HepG2 (cell line): ENCODE measurements at regions of chr6 and their contacts with region 1.

Region 1: GRCh38 chr6:143745166-143746133 is 67.7 kb downstream of the PHACTR2 start:
- DNase-seq: peak; percentile 100
- ATAC-seq: peak; percentile 94
- H3K4me3 ChIP-seq: peak overlapping the region; percentile 56 to 74 (median 57)
- H3K27ac ChIP-seq: peak overlapping the region; percentile 98
- H3K4me1 ChIP-seq: peaks cover 70% of the 10 kb centered on the region
- H3K27me3 ChIP-seq: no peaks in the 10 kb centered on the region
- CTCF ChIP-seq: no peak
- EP300 ChIP-seq: peak; percentile 93
- POLR2A ChIP-seq: peak in 1 of 2 experiments; percentile 90; a peak in 2 of 4 replicates
- RAD21 ChIP-seq: peak; percentile 61; the same call in 1 of the 2 replicates

Region 2: GRCh38 chr6:143575440-143575839 is 170.0 kb before region 1 on chr6:
- CTCF ChIA-PET with region 1: no interaction called
- POLR2A ChIA-PET with region 1: interaction called, 3 read pairs
- in situ Hi-C with region 1: no loop called
- intact Hi-C with region 1: loop called (anchors 5 kb)
- DNase-seq: peak; percentile 83
- ATAC-seq: peak; percentile 86
- H3K4me3 ChIP-seq: no peak overlapping the region
- H3K27ac ChIP-seq: no peak overlapping the region
- H3K4me1 ChIP-seq: no peaks in the 10 kb centered on the region
- H3K27me3 ChIP-seq: no peaks in the 10 kb centered on the region
- CTCF ChIP-seq: peak; percentile 94
- EP300 ChIP-seq: no peak
- POLR2A ChIP-seq: no peak
- RAD21 ChIP-seq: peak; percentile 95

Region 3: DNA sequence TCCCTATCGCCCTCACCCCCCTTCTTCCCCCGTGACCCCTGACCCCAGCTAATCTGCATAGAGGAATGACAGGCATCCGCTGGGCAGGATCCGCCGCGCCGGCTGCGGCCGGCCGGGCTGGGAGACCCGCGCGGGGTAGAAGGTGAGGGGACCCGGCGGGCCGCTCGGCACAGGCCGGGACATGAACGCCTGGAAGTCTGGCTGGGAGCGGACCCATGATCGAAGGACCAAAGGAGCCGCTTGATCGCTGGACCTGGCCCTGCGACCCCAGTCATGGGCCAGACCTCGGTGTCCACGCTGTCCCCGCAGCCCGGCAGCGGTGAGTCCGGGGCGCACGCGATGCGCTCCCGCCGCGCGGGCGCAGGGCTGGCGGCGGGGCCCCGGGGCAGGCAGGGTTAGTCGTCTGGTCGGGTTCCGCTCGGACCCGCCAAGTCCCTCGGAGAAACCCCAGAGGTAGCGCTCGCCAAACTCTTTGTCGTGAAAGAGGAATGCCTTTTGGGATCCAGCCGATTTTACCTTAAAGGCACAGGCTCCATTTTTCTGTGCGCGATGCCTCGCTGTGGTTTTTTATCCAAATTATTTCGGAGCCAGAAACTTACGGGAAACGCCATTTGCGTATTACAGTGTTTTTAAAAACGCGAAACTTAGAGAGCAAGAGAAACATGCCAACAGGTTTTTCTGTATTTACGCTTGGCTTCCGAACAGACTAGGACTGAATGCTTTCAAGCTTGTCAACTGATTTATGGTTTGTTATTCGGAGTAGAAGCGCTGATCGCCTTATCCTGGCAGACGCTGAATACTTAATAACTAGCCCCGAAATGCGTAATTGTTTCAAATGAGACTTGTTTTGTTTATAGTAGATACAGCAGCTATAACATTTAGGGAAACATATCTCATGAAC is 67.3 kb before region 1 on chr6 and contains the start of gene PHACTR2:
- CTCF ChIA-PET with region 1: no interaction called
- POLR2A ChIA-PET with region 1: interaction called, 20 read pairs
- in situ Hi-C with region 1: no loop called
- intact Hi-C with region 1: loop called (anchors 1 kb)
- DNase-seq: peak; percentile 76
- ATAC-seq: peak; percentile 97
- H3K4me3 ChIP-seq: peak within 1 kb of the TSS; percentile 79 to 90 (median 87)
- H3K27ac ChIP-seq: peak within 1 kb of the TSS; percentile 68
- H3K4me1 ChIP-seq: peaks cover 76% of the 10 kb centered on the region
- H3K27me3 ChIP-seq: no peaks in the 10 kb centered on the region
- CTCF ChIP-seq: peak; percentile 22; the same call in 1 of the 2 replicates
- EP300 ChIP-seq: peak; percentile 17 to 18; a peak in 1 of 4 replicates
- POLR2A ChIP-seq: peak; percentile 72 to 85
- RAD21 ChIP-seq: peak; percentile 76
- total RNA-seq, gene PHACTR2: 28.2 and 39.1 TPM in 2 replicates

Region 4: DNA sequence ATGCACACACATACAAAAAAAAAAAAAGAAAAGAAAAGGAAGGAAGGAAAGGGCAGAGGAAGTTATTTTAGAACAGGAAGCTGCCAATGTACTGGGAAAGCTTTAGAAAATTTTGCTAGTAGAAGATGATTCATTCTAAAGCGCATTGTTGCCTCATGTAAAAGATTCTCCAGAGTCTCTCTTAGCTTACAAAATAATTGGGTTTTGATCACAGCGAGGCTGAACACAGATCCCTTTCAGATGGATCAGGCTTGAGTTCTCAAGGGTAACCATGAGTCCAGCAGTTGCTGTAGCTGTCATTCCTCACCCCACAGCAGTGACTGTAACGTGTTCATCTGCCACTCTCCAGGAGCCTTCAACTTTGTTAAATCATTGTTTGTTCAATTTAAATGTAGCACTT is 14.2 kb after region 1 on chr6:
- CTCF ChIA-PET with region 1: no interaction called
- POLR2A ChIA-PET with region 1: interaction called, 27 read pairs
- in situ Hi-C with region 1: no loop called
- intact Hi-C with region 1: no loop called
- DNase-seq: no peak
- ATAC-seq: peak; percentile 54; the same call in 2 of the 3 replicates
- H3K4me3 ChIP-seq: no peak overlapping the region
- H3K27ac ChIP-seq: peak overlapping the region; percentile 20
- H3K4me1 ChIP-seq: peaks cover 25% of the 10 kb centered on the region
- H3K27me3 ChIP-seq: no peaks in the 10 kb centered on the region
- CTCF ChIP-seq: no peak
- EP300 ChIP-seq: no peak
- POLR2A ChIP-seq: no peak
- RAD21 ChIP-seq: no peak

Region 5: GRCh38 chr6:144013486-144013909 is 268.0 kb after region 1 on chr6:
- CTCF ChIA-PET with region 1: no interaction called
- POLR2A ChIA-PET with region 1: no interaction called
- in situ Hi-C with region 1: no loop called
- intact Hi-C with region 1: loop called (anchors 5 kb)
- DNase-seq: peak; percentile 81
- ATAC-seq: peak; percentile 79
- H3K4me3 ChIP-seq: no peak overlapping the region
- H3K27ac ChIP-seq: no peak overlapping the region
- H3K4me1 ChIP-seq: 0 out of 2 replicates have a peak, but pooled peaks cover 2% of the 10 kb centered on the region
- H3K27me3 ChIP-seq: peaks cover 2% of the 10 kb centered on the region in 2 experiments; a peak in 3 of 5 replicates
- CTCF ChIP-seq: peak; percentile 95
- EP300 ChIP-seq: no peak
- POLR2A ChIP-seq: no peak
- RAD21 ChIP-seq: peak; percentile 94